Lower leg skin (tissue), 4 donors: ENCODE measurements at regions of chr11 and their contacts with region 1.

Region 1: DNA sequence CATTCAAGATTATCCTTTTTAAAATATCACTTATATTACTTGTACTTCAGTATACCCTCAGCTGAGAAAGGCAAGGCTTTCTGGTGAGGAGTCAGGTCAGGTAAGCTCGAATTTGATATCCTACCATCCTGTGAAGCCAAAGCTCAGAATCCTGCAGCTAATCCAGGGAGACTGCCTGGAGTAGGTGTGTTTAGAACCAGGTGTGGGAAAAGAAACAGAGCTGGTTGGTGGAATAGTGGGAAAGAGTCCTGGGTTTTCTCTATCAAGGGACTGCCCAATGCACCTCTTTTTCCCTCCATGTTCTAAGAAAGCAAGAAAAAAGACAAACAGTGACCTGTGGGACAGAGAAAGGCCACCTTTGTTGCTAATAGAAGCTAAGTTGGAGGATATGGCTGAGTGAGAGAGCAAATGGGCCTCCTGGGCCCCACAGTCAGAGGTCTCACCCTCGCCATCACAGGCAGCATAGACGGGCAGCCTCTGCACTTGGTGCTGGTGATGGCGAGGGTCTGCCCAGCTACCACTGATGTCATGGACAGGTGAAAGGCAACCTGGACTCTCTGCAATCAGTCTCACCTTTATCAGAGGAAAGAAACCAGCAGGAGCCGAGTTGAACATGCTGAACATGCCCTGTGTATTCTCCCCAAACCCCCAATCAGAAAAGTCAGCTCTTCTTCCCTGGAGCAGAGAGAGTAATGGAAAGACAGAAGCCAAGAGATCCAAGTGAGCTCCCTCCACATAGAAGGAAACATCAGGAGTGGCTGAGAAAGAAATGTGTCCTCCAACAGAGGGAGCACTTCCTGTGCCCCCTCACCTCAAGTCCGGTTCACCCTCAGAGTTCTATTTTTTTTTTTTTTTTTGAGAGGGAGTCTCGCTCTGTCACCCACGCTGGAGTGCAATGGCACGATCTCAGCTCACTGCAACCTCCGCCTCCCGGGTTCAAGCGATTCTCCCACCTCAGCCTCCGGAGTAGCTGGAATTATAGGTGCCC is 491.3 kb downstream of the BUD13 start:
- DNase-seq: no peak
- H3K4me3 ChIP-seq: no peak overlapping the region
- CTCF ChIP-seq: no peak
- POLR2A ChIP-seq: no peak

Region 2: DNA sequence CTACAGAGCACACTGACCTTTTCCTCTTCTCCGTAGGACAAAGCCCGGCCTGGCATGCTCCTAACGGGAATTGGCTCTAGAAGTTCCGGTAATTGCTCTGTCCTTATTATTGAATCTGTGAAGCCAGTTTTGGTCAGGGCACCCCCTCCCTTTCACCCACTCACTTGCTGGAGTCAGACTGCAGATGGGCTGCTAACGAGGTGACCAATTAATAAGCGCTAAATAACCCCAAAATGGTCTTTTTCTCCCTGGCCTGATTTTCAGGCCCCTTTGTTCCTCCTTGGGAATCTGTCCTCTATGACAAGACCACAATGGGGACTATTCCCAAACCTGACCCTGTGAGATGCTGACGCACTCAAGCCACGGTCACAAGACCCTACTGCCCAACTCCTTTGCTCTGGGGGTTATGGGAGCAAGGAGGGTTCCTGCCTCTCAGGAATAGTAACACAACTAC is 167.2 kb before region 1 on chr11:
- intact Hi-C with region 1: no loop called
- DNase-seq: peak in 1 of 2 donors; percentile 39
- H3K4me3 ChIP-seq: no peak overlapping the region
- CTCF ChIP-seq: no peak
- POLR2A ChIP-seq: no peak

Region 3: DNA sequence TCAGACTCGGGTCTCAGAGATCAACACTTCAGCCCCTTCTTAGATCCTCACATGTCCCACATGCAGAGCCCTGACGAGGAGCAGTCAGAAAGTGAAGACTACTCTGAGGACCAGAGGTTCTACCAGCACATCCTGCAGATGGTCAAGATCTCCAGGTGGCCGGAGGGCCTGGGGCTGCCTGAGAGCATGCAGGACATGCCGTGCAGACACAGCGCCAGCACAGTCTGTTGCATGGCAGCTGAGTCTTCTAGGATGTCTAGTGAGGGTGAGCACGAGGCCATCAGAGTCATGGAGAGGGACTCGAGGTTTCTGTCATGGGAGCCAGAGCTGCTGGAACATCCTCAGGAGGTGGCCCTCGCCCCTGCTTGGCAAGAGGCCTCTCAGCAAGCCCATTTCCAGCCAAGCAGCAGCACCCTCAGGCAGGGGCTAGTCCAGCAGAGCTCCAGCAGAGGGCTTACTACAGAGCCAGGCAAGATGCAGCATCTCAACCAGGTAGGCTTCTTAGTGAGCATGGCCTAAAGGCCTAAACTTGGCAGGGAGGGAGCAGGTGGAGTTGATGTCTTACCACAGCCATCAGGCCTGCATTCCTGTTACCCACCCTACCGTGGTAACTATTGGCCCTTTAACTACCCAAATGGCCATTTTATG is 1074.8 kb after region 1 on chr11:
- intact Hi-C with region 1: loop called (anchors 10 kb)
- DNase-seq: no peak
- H3K4me3 ChIP-seq: no peak overlapping the region
- CTCF ChIP-seq: no peak
- POLR2A ChIP-seq: no peak